Mammary epithelial cell (primary cell): ENCODE measurements at regions of chr15 and their contacts with region 1.

Region 1: GRCh38 chr15:34847612-34848011 is 52.3 kb upstream of the ACTC1 start:
- DNase-seq: no peak
- H3K4me3 ChIP-seq: no peak overlapping the region
- H3K27ac ChIP-seq: no peak overlapping the region
- H3K4me1 ChIP-seq: no peaks in the 10 kb centered on the region
- H3K27me3 ChIP-seq: no peaks in the 10 kb centered on the region
- CTCF ChIP-seq: no peak

Region 2: GRCh38 chr15:34782901-34783300 is 64.7 kb before region 1 on chr15:
- CTCF ChIA-PET with region 1: no interaction called
- dilution Hi-C with region 1: no loop called
- in situ Hi-C with region 1: no loop called
- intact Hi-C with region 1: no loop called
- DNase-seq: peak; percentile 17
- H3K4me3 ChIP-seq: no peak overlapping the region
- H3K27ac ChIP-seq: no peak overlapping the region
- H3K4me1 ChIP-seq: no peaks in the 10 kb centered on the region
- H3K27me3 ChIP-seq: no peaks in the 10 kb centered on the region
- CTCF ChIP-seq: no peak

Region 3: DNA sequence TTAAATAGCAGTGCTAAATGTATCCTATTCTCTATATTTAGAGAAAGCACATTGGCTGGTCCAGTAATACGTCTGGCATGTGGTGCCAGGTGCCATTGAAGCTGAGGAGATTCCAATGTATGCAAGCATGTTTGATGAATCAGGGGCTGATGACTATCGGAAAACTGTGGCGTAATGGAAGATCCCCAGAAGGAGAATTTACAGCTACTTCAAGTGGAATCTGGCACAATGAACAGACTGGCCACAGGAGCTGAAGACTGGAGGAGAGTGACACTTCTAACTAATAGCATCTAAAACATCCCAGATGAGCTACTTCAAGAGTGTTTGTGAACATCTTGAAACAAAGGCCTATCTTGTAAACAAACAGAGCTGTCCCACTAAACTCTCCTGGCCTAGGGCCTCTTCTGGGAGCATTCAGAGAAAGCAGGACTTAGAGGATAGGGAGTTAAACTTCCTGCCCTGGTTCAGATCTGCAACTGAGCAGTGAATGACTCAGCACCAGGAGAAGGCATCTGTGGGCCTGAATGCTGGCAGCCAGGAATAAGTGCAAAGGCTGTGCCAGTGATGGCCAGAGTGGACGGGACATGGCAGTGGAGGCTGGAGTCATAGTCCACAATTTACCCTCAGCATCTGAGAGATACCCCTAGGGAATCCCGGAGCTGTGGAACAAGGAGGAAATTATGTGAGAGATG is 37.0 kb before region 1 on chr15:
- CTCF ChIA-PET with region 1: no interaction called
- dilution Hi-C with region 1: no loop called
- in situ Hi-C with region 1: no loop called
- intact Hi-C with region 1: loop called (anchors 5 kb)
- DNase-seq: peak; percentile 92
- H3K4me3 ChIP-seq: no peak overlapping the region
- H3K27ac ChIP-seq: peak overlapping the region; percentile 64
- H3K4me1 ChIP-seq: peaks cover 10% of the 10 kb centered on the region
- H3K27me3 ChIP-seq: no peaks in the 10 kb centered on the region
- CTCF ChIP-seq: no peak

Region 4: GRCh38 chr15:34889476-34889875 is 41.9 kb after region 1 on chr15:
- CTCF ChIA-PET with region 1: no interaction called
- dilution Hi-C with region 1: no loop called
- in situ Hi-C with region 1: no loop called
- intact Hi-C with region 1: no loop called
- DNase-seq: peak; percentile 12
- H3K4me3 ChIP-seq: no peak overlapping the region
- H3K27ac ChIP-seq: no peak overlapping the region
- H3K4me1 ChIP-seq: no peaks in the 10 kb centered on the region
- H3K27me3 ChIP-seq: no peaks in the 10 kb centered on the region
- CTCF ChIP-seq: no peak